Caco-2 (cell line): ENCODE measurements at regions of chr2 and their contacts with region 1.

Region 1: DNA sequence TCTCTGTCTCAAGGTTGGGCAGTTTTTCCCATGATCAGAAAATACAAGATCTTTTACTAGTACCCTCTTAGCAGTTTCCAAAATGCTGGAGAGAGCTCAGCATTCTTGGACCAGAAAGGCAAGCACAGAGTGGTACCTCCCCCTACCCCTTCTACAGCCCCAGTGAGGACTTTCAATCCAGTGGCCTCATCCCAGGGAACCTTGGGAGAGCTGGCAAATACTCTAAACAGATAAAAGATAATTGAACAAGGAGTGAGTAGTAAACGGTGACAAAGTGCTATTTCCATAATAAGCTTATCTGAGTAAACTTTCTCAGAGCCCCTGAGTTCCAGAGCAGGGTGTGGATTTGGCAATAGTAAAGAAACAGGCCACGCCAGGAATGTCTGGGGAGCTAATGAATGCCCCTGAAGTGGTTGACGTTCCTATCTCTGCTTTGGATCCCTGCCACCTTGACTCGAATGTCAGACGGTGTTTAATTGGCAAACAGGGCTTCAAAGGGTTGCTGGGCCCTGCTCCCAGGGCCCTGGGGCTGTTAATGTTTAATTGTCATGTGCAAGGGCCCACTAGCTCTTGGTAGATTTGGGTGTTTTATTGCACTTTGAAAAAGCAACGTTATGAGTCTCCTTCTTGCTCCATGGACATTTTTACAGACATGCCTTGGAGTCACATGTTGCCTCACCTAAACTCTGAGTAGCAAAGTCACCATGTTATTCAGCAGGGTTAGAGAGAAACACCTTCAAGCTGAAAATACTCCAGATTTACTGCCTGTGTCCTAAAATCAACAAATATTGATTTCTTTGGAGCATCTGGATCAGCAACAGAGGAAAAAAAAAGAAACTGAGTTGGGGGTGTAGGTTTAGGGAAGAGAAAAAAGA is 239.9 kb downstream of the CYRIA start:
- DNase-seq: peak; percentile 97 to 99
- H3K4me3 ChIP-seq: no peak overlapping the region
- H3K4me3 Mint-ChIP-seq: peak overlapping the region; percentile 55
- H3K27ac Mint-ChIP-seq: peak overlapping the region; percentile 99
- H3K4me1 ChIP-seq: peaks cover 46% of the 10 kb centered on the region
- H3K4me1 Mint-ChIP-seq: peaks cover 58% of the 10 kb centered on the region
- H3K27me3 ChIP-seq: no peaks in the 10 kb centered on the region
- H3K27me3 Mint-ChIP-seq: no peaks in the 10 kb centered on the region
- CTCF ChIP-seq: no peak

Region 2: DNA sequence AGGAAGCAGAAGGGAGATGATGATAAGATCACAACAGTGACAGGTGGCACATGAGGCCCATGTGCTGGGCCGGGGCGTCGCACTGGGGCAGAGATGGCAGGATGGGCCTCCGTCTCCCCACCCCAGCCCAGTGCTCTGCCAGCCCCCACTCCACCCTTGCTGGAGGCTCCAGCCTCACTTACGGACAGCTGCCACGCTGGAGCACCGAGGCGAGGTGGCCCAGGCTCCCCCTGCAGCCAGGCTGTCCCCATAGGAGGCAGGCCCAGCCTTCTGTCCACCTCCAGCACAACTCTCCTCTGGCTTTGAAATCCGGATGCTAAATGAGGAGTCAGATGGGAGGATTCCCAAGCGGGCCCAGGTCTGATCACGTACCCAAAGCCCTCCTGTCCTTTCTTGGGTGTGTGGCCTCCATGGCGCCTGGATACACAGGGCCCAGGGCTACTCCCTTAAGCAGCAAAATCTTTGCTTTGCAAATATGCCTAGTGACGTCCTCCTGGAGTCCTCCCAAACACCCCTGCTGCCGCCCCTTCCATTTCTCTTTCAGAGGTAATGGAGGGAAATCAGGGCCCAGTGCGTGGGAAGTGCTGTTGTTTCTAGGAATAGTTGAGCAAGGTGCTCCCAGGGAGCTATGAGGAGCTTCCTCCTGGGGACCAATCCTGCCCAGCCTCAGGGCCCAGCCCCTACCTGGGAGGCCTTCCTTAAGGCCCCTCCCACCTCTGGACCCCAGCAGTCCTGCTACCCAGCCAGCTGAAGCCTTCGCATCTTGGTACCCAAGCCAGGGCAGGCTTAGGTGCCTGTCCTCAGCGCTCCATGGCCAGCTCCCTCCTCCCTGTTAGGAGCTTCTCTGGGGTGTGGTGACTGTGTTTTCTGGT is 655.8 kb before region 1 on chr2:
- CTCF ChIA-PET with region 1: no interaction called
- POLR2A ChIA-PET with region 1: no interaction called
- intact Hi-C with region 1: loop called (anchors 1 kb)
- DNase-seq: no peak
- H3K4me3 ChIP-seq: no peak overlapping the region
- H3K4me3 Mint-ChIP-seq: no peak overlapping the region
- H3K27ac Mint-ChIP-seq: peak overlapping the region; percentile 53
- H3K4me1 ChIP-seq: peaks cover 44% of the 10 kb centered on the region
- H3K4me1 Mint-ChIP-seq: peaks cover 53% of the 10 kb centered on the region
- H3K27me3 ChIP-seq: no peaks in the 10 kb centered on the region
- H3K27me3 Mint-ChIP-seq: no peaks in the 10 kb centered on the region
- CTCF ChIP-seq: no peak

Region 3: GRCh38 chr2:16012619-16013358 is 412.9 kb before region 1 on chr2:
- CTCF ChIA-PET with region 1: no interaction called
- POLR2A ChIA-PET with region 1: no interaction called
- intact Hi-C with region 1: loop called (anchors 1 kb)
- DNase-seq: peak; percentile 83
- H3K4me3 ChIP-seq: peak overlapping the region; percentile 26; the same call in 1 of the 2 replicates
- H3K4me3 Mint-ChIP-seq: peak overlapping the region; percentile 75
- H3K27ac Mint-ChIP-seq: peak overlapping the region; percentile 96
- H3K4me1 ChIP-seq: peaks cover 18% of the 10 kb centered on the region; the same call in 1 of the 2 replicates
- H3K4me1 Mint-ChIP-seq: peaks cover 26% of the 10 kb centered on the region
- H3K27me3 ChIP-seq: no peaks in the 10 kb centered on the region
- H3K27me3 Mint-ChIP-seq: no peaks in the 10 kb centered on the region
- CTCF ChIP-seq: no peak

Region 4: GRCh38 chr2:16330571-16330970 is 95.1 kb before region 1 on chr2:
- CTCF ChIA-PET with region 1: interaction called, 3 read pairs
- POLR2A ChIA-PET with region 1: interaction called, 9 read pairs
- intact Hi-C with region 1: loop called (anchors 1 kb)
- DNase-seq: peak; percentile 93 to 96
- H3K4me3 ChIP-seq: no peak overlapping the region
- H3K4me3 Mint-ChIP-seq: peak overlapping the region; percentile 58
- H3K27ac Mint-ChIP-seq: peak overlapping the region; percentile 98
- H3K4me1 ChIP-seq: peaks cover 62% of the 10 kb centered on the region
- H3K4me1 Mint-ChIP-seq: peaks cover 76% of the 10 kb centered on the region
- H3K27me3 ChIP-seq: no peaks in the 10 kb centered on the region
- H3K27me3 Mint-ChIP-seq: no peaks in the 10 kb centered on the region
- CTCF ChIP-seq: no peak

Region 5: GRCh38 chr2:16454621-16455020 is 28.9 kb after region 1 on chr2:
- CTCF ChIA-PET with region 1: no interaction called
- POLR2A ChIA-PET with region 1: interaction called, 3 read pairs
- intact Hi-C with region 1: loop called (anchors 1 kb)
- DNase-seq: peak; percentile 51 to 64
- H3K4me3 ChIP-seq: no peak overlapping the region
- H3K4me3 Mint-ChIP-seq: peak overlapping the region; percentile 0
- H3K27ac Mint-ChIP-seq: peak overlapping the region; percentile 46
- H3K4me1 ChIP-seq: peaks cover 12% of the 10 kb centered on the region
- H3K4me1 Mint-ChIP-seq: peaks cover 14% of the 10 kb centered on the region
- H3K27me3 ChIP-seq: no peaks in the 10 kb centered on the region
- H3K27me3 Mint-ChIP-seq: no peaks in the 10 kb centered on the region
- CTCF ChIP-seq: no peak

Region 6: DNA sequence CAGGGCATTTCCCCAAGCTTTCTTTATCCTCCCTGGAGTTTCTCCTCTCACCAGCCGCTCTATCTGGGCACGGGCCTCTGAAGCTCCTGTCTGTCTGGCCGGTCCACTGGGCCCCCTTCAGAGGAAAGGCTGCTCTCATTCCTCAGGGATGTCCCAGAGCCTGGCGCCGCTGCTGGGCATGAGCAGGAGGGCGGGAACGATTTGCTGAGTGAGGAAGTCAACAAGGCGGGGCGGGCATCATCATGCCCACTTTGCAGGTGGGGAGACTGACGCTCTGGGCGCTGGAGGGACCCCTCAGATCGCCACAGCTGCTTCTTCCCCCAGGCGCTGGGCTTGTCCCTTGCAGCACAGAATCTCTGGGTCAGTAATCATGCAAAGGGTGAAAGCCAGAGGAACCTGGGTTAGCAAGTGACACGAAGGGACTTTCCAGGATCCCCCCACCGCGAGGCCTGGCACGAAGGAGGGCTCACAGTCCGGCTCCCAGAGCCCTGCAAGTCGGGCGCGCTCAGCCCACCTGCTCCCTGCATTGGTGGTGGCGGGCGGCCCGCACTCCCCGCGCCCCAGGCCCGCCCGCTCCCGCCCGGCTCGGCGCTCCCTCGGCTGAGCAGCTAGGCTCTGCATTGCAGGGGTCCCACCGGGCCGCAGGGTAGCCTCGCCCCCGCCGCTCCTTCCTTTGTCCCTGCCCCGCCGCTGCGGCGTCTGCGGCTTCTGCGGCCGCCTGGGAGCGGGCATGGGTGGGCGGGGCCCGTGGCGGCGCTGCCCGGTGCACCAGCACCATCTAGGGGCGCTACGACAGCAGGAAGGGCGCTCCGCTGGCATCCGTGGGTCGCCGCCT is 82.2 kb after region 1 on chr2:
- CTCF ChIA-PET with region 1: interaction called, 12 read pairs
- POLR2A ChIA-PET with region 1: no interaction called
- intact Hi-C with region 1: loop called (anchors 1 kb)
- DNase-seq: peak; percentile 66 to 82
- H3K4me3 ChIP-seq: peak overlapping the region; percentile 26
- H3K4me3 Mint-ChIP-seq: peak overlapping the region; percentile 61
- H3K27ac Mint-ChIP-seq: peak overlapping the region; percentile 37
- H3K4me1 ChIP-seq: peaks cover 36% of the 10 kb centered on the region
- H3K4me1 Mint-ChIP-seq: peaks cover 12% of the 10 kb centered on the region
- H3K27me3 ChIP-seq: no peaks in the 10 kb centered on the region
- H3K27me3 Mint-ChIP-seq: no peaks in the 10 kb centered on the region
- CTCF ChIP-seq: peak; percentile 83 to 91